Left ventricle myocardium inferior (tissue), 1 donor: ENCODE measurements at regions of chr4 and their contacts with region 1.

Region 1: GRCh38 chr4:106502106-106502699 is 133.6 kb upstream of the GIMD1 start:
- DNase-seq: peak; percentile 29
- H3K4me3 ChIP-seq: no peak overlapping the region
- H3K27ac ChIP-seq: no peak overlapping the region
- H3K4me1 ChIP-seq: no peaks in the 10 kb centered on the region
- H3K27me3 ChIP-seq: no peaks in the 10 kb centered on the region
- CTCF ChIP-seq: peak; percentile 71

Region 2: DNA sequence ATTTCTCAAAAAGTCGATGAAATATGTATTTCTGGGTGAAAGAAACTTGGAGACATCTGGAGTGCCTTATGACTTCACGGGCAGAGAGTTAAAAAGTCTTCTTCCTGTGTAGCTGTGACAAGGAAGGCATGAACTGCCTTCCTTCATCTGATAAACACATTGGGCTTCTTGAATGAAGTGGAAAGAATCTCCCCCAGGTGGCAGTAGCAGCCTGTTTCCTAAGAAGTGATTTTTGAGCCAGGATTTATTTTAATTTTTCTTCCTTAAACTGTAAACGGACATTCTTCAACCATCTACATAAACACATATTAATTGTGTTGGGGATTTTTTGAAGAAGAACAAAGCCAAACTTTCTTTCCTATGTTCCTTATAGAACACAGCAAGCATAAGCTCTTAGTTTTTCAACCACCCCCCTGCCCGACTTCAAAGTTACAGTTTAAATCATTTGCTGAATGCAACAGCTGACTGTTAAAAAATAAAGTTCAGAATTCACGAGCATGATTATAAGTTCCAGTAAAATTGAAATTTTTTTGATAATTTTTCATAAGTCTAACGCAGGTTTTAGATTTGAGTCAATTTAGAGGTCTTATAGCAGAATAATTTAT is 132.6 kb before region 1 on chr4:
- intact Hi-C with region 1: loop called (anchors 10 kb)
- DNase-seq: no peak
- H3K4me3 ChIP-seq: no peak overlapping the region
- H3K27ac ChIP-seq: no peak overlapping the region
- H3K4me1 ChIP-seq: peaks cover 20% of the 10 kb centered on the region
- H3K27me3 ChIP-seq: peaks cover 14% of the 10 kb centered on the region
- CTCF ChIP-seq: peak; percentile 63

Region 3: DNA sequence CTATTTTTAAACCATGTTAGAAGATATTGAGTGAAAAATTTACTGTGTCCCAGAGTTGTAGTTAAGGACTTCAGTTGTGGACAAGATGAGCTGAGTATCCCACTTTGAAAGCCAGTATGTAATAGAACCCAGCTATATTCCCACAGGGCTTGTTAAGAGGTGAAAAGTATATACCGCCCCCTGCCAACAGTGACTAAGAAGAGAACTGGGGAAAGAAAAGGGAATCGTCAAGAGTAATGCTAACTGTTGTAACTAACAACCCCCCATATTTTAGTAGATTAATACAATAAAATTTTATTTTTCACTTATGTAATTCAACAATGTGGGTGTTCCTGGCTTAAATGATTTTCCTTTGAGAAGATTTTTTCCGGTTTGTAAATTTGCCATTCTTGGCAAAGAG is 116.8 kb after region 1 on chr4:
- intact Hi-C with region 1: no loop called
- DNase-seq: no peak
- H3K4me3 ChIP-seq: no peak overlapping the region
- H3K27ac ChIP-seq: no peak overlapping the region
- H3K4me1 ChIP-seq: no peaks in the 10 kb centered on the region
- H3K27me3 ChIP-seq: no peaks in the 10 kb centered on the region
- CTCF ChIP-seq: no peak

Region 4: GRCh38 chr4:106986486-106986885 is 484.3 kb after region 1 on chr4:
- intact Hi-C with region 1: no loop called
- DNase-seq: no peak
- H3K4me3 ChIP-seq: no peak overlapping the region
- H3K27ac ChIP-seq: no peak overlapping the region
- H3K4me1 ChIP-seq: no peaks in the 10 kb centered on the region
- H3K27me3 ChIP-seq: no peaks in the 10 kb centered on the region
- CTCF ChIP-seq: no peak